ENCODE measurements at regions of chr10 and their contacts with region 1.

Region 1: GRCh38 chr10:12782537-12782936 is 219.0 kb downstream of the CCDC3 start:
- DNase-seq: peak in 1 of 2 experiments; percentile 20
- H3K4me3 ChIP-seq: no peak overlapping the region
- H3K27ac ChIP-seq: no peak overlapping the region
- H3K4me1 ChIP-seq: no peaks in the 10 kb centered on the region
- H3K27me3 ChIP-seq: no peaks in the 10 kb centered on the region
- CTCF ChIP-seq: peak; percentile 77

Region 2: GRCh38 chr10:12628964-12629766 is 153.4 kb before region 1 on chr10:
- CTCF ChIA-PET with region 1: no interaction called
- POLR2A ChIA-PET with region 1: no interaction called
- intact Hi-C with region 1: no loop called
- DNase-seq: peak in 1 of 2 experiments; percentile 53
- H3K4me3 ChIP-seq: no peak overlapping the region
- H3K27ac ChIP-seq: peak overlapping the region; percentile 46
- H3K4me1 ChIP-seq: peaks cover 14% of the 10 kb centered on the region
- H3K27me3 ChIP-seq: no peaks in the 10 kb centered on the region
- CTCF ChIP-seq: no peak

Region 3: GRCh38 chr10:12811826-12812225 is 29.3 kb after region 1 on chr10:
- CTCF ChIA-PET with region 1: no interaction called
- POLR2A ChIA-PET with region 1: no interaction called
- intact Hi-C with region 1: no loop called
- DNase-seq: no peak
- H3K4me3 ChIP-seq: no peak overlapping the region
- H3K27ac ChIP-seq: no peak overlapping the region
- H3K4me1 ChIP-seq: no peaks in the 10 kb centered on the region
- H3K27me3 ChIP-seq: no peaks in the 10 kb centered on the region
- CTCF ChIP-seq: no peak

Region 4: DNA sequence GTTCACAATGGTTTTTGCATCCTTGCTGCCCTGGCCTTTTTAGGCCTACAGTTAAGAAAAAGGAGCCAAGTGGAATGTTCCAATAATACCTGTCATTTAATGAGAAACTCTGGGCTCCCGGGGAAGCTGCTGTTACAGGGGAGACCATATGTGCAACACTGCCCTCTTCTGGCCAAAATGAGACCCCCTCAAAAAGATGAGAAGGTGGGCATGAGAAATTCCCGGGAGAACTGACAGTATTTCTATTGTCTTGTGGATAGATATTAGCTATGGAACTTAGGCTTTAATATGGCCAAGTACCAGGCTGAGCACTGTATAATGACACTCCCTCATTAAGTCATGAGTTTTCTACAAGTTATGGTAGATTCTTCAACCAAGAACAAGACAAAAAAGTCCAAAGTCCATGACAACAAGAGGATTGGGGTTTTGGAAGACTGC is 119.6 kb after region 1 on chr10:
- CTCF ChIA-PET with region 1: no interaction called
- POLR2A ChIA-PET with region 1: no interaction called
- intact Hi-C with region 1: loop called (anchors 5 kb)
- DNase-seq: peak in 1 of 2 experiments; percentile 36
- H3K4me3 ChIP-seq: no peak overlapping the region
- H3K27ac ChIP-seq: no peak overlapping the region
- H3K4me1 ChIP-seq: no peaks in the 10 kb centered on the region
- H3K27me3 ChIP-seq: peaks cover 33% of the 10 kb centered on the region
- CTCF ChIP-seq: peak; percentile 82

Measured in PC-9 (cell line).